ENCODE measurements at regions of chr1 and their contacts with region 1.

Region 1: DNA sequence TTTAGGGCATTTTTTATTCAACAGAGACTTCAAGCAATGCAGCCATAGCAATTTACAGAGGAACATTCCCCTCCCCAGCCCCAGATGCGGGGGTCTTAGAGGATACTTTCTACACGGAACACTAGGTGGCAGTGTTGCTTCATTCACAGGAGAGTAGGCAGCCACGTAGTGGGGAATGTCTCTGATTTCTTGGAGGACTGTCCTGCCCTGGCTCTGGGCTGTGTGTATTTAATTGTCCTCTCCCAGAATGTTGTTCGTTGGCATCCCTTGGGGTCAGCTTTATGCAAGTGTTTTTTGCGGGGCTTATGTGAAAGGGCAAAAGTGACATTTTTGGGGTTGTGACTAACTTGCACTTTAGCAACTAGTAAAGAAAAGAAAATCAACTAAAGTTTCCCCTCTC is 96.9 kb downstream of the PAPPA2 start:
- DNase-seq: no peak
- ATAC-seq: peak; percentile 79 to 83
- H3K4me3 ChIP-seq: no peak overlapping the region
- H3K27ac ChIP-seq: no peak overlapping the region
- H3K4me1 ChIP-seq: no peaks in the 10 kb centered on the region
- H3K27me3 ChIP-seq: peaks cover 6% of the 10 kb centered on the region
- CTCF ChIP-seq: peak; percentile 78

Region 2: GRCh38 chr1:176494436-176494835 is 65.4 kb before region 1 on chr1:
- intact Hi-C with region 1: no loop called
- DNase-seq: no peak
- ATAC-seq: peak in 1 of 2 donors; percentile 39
- H3K4me3 ChIP-seq: no peak overlapping the region
- H3K27ac ChIP-seq: no peak overlapping the region
- H3K4me1 ChIP-seq: no peaks in the 10 kb centered on the region
- H3K27me3 ChIP-seq: no peaks in the 10 kb centered on the region
- CTCF ChIP-seq: no peak

Region 3: GRCh38 chr1:176843352-176844297 is 283.7 kb after region 1 on chr1:
- intact Hi-C with region 1: loop called (anchors 10 kb)
- DNase-seq: no peak
- ATAC-seq: peak in 1 of 2 donors; percentile 47
- H3K4me3 ChIP-seq: no peak overlapping the region
- H3K27ac ChIP-seq: no peak overlapping the region
- H3K4me1 ChIP-seq: peaks cover 8% of the 10 kb centered on the region
- H3K27me3 ChIP-seq: no peaks in the 10 kb centered on the region
- CTCF ChIP-seq: peak; percentile 42